Kidney (tissue), 22 donors: ENCODE measurements at regions of chr18 and their contacts with region 1.

Region 1: DNA sequence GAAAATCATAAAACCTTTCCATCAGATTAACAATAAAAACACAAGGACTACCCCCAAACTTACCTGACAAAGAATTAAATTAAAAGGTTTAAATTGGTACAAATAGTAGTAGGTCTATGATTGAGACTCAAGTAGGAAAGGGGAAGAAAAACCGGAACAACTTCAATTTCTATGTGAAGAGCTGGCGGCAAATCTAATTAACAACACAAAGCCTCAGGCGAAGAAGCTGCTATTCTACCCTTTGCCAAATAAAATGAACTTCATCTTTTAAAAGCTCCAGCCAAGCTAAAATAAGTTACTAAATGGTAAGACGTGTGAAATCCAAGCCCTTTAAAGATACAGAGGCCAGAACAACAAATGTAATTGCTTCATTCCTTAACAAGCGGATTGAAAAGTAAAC is 146.5 kb downstream of the DLGAP1 start:
- DNase-seq: no peak
- H3K4me3 ChIP-seq: no peak overlapping the region
- H3K27ac ChIP-seq: no peak overlapping the region
- H3K4me1 ChIP-seq: no peaks in the 10 kb centered on the region
- H3K27me3 ChIP-seq: no peaks in the 10 kb centered on the region
- CTCF ChIP-seq: no peak

Region 2: DNA sequence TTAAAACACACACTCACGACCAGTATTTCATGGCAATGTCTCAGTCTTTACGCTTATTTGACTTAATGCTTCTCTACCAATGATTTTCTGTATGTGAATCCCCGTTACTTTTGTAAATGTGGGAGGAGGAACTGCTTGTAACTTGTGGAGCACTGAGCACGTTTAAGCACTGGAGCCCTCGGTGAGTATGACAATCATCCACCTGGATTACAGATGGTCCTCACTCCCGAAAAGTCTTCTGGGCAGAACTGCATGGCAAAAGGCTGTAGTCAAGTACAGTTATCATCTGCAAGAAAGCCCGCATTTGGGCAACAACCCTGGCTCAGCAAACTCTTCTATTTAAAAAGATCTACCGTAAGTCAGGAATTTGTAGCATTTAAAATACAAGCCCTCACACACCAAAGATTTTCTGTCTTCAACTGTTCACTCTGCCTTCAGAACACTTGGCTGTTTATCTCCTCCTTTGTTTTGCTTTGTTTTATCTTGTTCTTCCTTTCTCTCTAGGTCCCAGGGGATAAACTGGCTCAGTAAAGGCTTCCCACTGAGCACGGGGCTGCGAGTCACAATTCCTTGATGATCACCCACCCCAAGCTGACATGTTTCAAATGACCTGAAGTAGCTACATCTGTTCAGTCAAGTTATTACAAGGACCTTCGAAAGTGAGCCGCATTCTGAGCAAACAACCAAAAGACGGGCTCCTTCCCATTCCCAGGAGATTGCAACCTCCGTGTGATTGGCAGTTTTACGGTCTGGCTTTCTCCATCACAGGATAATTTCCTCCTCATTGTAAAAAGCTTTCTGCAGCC is 44.4 kb after region 1 on chr18:
- intact Hi-C with region 1: loop called (anchors 10 kb)
- DNase-seq: peak in 3 of 5 donors; percentile 43 to 76 (median 60)
- H3K4me3 ChIP-seq: no peak overlapping the region
- H3K27ac ChIP-seq: no peak overlapping the region
- H3K4me1 ChIP-seq: no peaks in the 10 kb centered on the region
- H3K27me3 ChIP-seq: no peaks in the 10 kb centered on the region
- CTCF ChIP-seq: no peak

Region 3: GRCh38 chr18:4417714-4418113 is 109.1 kb after region 1 on chr18:
- intact Hi-C with region 1: no loop called
- DNase-seq: no peak
- H3K4me3 ChIP-seq: no peak overlapping the region
- H3K27ac ChIP-seq: no peak overlapping the region
- H3K4me1 ChIP-seq: no peaks in the 10 kb centered on the region
- H3K27me3 ChIP-seq: no peaks in the 10 kb centered on the region
- CTCF ChIP-seq: no peak

Region 4: DNA sequence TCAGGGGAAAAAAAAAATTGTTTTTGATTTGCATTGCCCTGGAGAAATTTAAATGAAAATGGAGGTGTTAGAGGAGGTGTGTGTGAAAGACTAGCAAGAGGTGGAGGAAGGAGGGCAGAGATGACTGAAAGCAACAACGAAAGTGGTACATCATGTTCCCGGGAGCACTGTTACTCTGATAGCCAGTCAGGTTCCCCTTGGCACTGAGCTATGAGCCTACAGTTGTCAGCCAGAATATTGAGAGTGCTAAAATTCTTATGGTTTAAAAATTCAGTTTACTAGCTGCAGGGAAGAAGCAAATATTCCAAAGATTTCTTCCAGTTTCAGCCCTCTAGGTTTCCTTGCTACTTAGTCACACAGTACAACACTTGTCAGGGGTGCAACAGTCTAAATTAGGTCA is 513.2 kb after region 1 on chr18:
- intact Hi-C with region 1: no loop called
- DNase-seq: no peak
- H3K4me3 ChIP-seq: no peak overlapping the region
- H3K27ac ChIP-seq: no peak overlapping the region
- H3K4me1 ChIP-seq: no peaks in the 10 kb centered on the region
- H3K27me3 ChIP-seq: no peaks in the 10 kb centered on the region
- CTCF ChIP-seq: no peak